ENCODE measurements at regions of chrX and their contacts with region 1.

Region 1: DNA sequence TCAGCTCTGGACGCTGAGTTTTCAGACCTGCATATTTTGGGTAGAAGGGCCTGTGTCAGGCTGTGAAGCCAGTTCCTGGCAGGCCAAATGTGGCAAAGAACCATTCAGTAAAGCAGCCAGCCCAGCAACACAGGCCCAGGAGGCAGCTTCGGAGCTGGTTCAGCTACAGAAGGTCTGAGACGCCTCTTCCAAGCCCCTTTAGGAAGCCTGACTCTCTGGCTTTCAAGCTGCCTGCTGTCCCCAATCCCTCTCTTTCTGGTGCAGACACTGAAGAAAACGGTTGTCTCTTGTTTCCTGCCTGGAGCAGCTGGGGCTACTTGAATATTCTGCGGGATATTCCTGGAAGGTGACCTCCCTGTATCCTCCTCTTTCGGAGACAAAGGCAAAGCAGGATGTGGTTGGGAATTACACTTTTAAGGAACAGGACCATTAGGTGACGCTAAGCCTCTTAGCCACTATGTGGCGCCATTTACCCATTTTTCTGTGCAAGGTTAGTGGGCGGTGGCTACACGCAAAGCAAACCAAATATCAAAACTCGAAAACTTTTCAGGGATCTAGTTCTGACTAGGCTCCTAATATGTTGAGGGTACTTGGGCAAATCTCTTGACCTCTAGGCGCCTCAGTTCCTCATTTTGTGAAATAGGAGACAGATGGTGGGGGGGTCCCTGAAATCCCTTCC is 47.2 kb upstream of the LAS1L start:
- DNase-seq: peak in 1 of 2 donors; percentile 83
- H3K4me3 ChIP-seq: no peak overlapping the region
- H3K27ac ChIP-seq: no peak overlapping the region
- H3K4me1 ChIP-seq: no peaks in the 10 kb centered on the region
- H3K27me3 ChIP-seq: no peaks in the 10 kb centered on the region
- CTCF ChIP-seq: peak; percentile 61 to 87 (median 81)

Region 2: DNA sequence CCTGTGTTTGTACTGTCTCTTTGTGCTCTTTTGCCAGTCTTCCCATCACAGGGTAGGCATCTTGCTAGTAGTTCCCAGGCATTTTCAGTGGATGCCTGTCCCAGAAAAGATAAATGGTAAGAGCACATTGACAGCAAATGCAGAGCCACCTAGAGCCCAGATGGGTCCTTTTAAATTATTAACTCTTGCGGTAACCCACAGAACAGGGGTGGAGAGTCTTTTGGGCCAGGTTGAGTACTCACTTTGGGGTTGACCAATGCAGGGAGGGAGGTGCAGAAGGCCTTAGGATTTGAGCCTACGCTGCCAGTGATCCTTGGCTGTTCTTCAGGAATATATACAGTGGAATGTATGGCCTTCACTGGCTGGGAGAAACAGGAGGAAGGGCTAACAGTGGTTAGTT is 259.5 kb after region 1 on chrX:
- intact Hi-C with region 1: no loop called
- DNase-seq: no peak
- H3K4me3 ChIP-seq: no peak overlapping the region
- H3K27ac ChIP-seq: no peak overlapping the region
- H3K4me1 ChIP-seq: no peaks in the 10 kb centered on the region
- H3K27me3 ChIP-seq: no peaks in the 10 kb centered on the region
- CTCF ChIP-seq: no peak

Region 3: DNA sequence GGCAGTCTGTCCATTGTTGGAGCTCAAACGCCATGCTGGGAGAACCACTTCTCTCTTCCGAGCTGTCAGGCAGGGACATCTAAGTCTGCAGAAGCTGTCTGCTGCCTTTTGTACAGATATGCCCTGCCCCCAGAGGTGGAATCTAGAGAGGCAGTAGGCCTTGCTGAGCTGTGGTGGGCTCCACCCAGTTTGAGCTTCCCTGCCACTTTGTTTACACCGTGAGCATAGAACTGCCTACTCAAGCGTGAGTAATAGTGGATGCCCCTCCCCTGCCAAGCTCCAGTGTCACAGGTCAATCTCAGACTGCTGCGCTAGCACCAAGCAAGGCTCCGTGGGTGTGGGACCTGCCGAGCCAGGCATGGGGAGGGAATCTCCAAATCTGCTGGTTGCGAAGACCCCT is 312.3 kb after region 1 on chrX:
- intact Hi-C with region 1: no loop called
- DNase-seq: no peak
- H3K4me3 ChIP-seq: no peak overlapping the region
- H3K27ac ChIP-seq: no peak overlapping the region
- H3K4me1 ChIP-seq: no peaks in the 10 kb centered on the region
- H3K27me3 ChIP-seq: no peaks in the 10 kb centered on the region
- CTCF ChIP-seq: no peak

Region 4: GRCh38 chrX:65985922-65986588 is 404.3 kb after region 1 on chrX:
- intact Hi-C with region 1: loop called (anchors 1 kb)
- DNase-seq: no peak
- H3K4me3 ChIP-seq: no peak overlapping the region
- H3K27ac ChIP-seq: no peak overlapping the region
- H3K4me1 ChIP-seq: no peaks in the 10 kb centered on the region
- H3K27me3 ChIP-seq: no peaks in the 10 kb centered on the region
- CTCF ChIP-seq: peak; percentile 12 to 57 (median 44)

Region 5: DNA sequence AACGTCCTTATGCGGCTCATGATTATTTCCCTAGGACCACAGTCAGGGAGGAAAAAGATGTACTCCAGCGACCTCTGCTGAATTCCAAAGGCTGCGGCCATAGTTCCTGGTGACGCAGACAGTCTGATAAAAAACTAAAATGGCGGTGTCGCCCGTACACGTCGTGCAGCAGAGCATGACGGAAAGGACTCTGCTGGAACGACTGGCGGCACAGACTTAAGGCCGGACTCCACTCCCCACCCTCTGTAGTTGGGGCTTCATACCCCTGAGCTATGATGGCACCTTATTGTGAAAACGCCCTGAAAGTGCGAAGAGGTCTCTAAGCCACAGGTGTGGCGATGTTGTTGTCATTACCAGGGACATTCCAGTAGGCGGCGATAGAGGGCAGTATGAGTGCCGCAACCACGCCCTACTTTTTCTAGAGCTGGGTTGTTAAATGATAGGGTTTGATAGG is 1147.0 kb after region 1 on chrX:
- intact Hi-C with region 1: loop called (anchors 10 kb)
- DNase-seq: peak in 1 of 2 donors; percentile 68
- H3K4me3 ChIP-seq: peak overlapping the region; percentile 47 to 59
- H3K27ac ChIP-seq: no peak overlapping the region
- H3K4me1 ChIP-seq: no peaks in the 10 kb centered on the region
- H3K27me3 ChIP-seq: no peaks in the 10 kb centered on the region
- CTCF ChIP-seq: peak; percentile 40 to 71 (median 57)